Lower leg skin (tissue), 4 donors: ENCODE measurements at regions of chr10 and their contacts with region 1.

Region 1: GRCh38 chr10:67602268-67602950 is 93.6 kb downstream of the CTNNA3 start:
- DNase-seq: no peak
- H3K4me3 ChIP-seq: no peak overlapping the region
- CTCF ChIP-seq: no peak
- POLR2A ChIP-seq: no peak

Region 2: DNA sequence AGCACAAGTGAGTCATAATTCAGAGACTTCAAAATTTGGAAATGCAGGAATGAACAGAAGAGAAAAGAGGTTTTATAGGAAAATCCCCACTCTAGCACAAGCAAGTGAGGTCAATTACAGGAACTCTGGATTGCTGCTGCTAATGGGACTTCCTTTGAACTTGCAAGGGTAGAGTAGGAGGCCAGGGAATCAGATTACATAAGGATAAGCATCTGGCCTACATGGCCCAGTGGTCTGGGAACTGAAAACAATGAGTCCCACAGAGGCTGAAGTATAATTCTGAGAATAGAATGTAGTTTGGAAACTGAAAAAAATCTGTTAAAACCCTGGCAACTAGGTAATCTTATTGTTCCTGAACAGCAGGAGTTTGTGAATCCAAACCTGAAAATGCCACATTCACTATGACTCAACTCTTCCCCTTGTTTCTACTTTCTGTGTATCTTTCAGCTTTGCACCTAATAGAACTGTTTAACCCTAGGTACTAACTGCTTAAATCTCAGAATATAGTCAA is 27.1 kb after region 1 on chr10:
- intact Hi-C with region 1: loop called (anchors 1 kb)
- DNase-seq: no peak
- H3K4me3 ChIP-seq: no peak overlapping the region
- CTCF ChIP-seq: no peak
- POLR2A ChIP-seq: no peak

Region 3: GRCh38 chr10:67657775-67658174 is 55.4 kb after region 1 on chr10:
- intact Hi-C with region 1: no loop called
- DNase-seq: no peak
- H3K4me3 ChIP-seq: no peak overlapping the region
- CTCF ChIP-seq: no peak
- POLR2A ChIP-seq: no peak

Region 4: DNA sequence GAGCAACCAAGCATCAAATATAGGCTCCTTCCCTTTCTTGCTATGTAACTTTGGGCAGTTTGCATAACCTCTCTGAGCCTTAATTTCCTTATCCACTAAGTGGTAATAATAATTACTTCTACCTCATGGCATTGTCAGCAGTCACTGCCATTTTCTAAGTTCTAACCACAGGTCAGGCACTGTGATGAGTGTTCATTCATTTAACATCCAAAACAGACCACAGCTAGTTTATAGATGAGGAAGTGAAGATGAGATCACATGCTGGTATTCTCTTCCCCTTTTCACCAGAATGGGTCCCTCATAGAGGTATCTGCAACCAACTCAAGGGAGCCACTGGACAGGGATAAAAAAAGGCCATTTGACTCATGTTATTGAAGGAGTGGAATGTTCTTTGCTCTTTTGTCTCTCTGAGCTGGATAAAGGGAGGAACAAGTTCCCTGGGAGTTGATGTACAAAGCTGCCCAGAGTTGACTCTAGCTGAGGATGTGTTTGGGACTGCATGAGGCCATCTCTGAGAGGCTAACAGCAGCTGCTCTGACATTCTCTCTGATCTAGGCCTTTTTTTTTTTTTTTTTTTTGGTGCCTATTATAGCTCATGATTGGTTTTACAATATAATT is 170.6 kb after region 1 on chr10:
- intact Hi-C with region 1: no loop called
- DNase-seq: no peak
- H3K4me3 ChIP-seq: no peak overlapping the region
- CTCF ChIP-seq: no peak
- POLR2A ChIP-seq: no peak